GM10248 (cell line): ENCODE measurements at regions of chr14 and their contacts with region 1.

Region 1: GRCh38 chr14:50085570-50086320 is 30.6 kb downstream of the VCPKMT start:
- DNase-seq: peak; percentile 69
- CTCF ChIP-seq: no peak

Region 2: DNA sequence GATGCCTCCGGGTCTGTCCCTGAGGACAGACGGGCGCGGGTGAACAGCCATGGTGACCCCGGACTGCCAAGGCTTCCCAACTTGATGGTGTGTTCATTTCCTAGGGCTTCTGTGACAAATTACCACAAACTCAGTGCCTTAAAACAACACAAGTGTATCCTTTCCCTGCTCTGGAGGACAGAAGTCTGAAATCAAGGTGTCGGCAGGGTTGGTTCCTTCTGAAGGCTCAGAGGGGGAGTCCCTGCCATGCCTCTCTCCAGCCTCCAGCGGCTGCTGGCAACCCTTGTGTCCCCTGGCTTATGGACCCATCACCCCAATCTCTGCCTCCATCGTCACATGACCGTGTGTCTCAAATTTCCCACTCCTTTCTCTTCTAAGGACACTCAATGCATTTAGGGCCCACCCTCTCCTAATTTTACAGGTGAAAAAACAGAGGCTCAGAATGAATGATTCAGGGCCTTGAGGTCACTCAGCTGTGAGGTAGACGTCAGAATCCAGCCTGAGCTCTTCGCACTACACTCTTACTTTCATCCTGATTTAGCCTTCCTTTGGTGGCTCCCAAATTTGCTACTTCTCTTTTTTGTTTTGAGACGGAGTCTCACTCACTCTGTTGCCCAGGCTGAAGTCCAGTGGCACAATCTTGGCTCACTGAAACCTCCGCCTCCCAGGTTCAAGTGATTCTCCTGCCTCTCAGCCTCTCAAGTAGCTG is 14.8 kb before region 1 on chr14:
- CTCF ChIA-PET with region 1: interaction called, 28 read pairs
- POLR2A ChIA-PET with region 1: interaction called, 5 read pairs
- DNase-seq: no peak
- CTCF ChIP-seq: no peak

Region 3: GRCh38 chr14:50103558-50103957 is 17.8 kb after region 1 on chr14:
- CTCF ChIA-PET with region 1: interaction called, 10 read pairs
- POLR2A ChIA-PET with region 1: no interaction called
- DNase-seq: no peak
- CTCF ChIP-seq: no peak